ENCODE measurements at regions of chr14 and their contacts with region 1.

Region 1: DNA sequence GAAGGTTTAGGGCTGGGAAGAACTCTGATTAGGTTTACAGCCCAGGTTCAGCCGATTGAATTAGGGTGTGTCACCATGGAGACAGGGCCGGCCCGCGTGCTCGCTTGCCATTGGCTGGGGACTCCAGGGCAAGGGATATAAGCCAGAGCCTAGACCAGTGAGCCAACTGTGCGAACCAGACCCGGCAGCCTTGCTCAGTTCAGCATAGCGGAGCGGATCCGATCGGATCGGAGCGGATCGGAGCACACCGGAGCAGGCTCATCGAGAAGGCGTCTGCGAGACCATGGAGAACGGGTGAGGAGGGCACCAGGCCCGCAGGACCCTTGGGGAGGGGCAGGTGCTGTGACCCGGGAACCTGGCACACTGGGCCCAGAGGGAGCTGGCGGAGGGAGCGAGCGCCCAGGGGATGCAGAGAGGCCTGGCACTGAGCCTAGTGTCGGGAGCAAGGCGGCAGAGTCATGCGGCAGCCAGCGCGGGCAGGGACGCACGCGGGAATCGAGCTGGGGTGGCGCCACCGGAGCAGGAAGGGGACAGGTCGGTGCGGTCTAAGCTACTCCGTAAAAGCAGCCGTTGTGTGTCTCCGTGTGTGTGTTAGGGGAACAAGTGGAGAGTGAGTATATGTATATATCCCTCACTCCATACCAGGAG is at the start of gene PNP:
- DNase-seq: peak; percentile 95
- H3K4me3 ChIP-seq: peak within 1 kb of the TSS; percentile 78 to 84
- H3K27ac ChIP-seq: peak within 1 kb of the TSS; percentile 64 to 91
- H3K4me1 ChIP-seq: peaks cover 0 to 14% of the 10 kb centered on the region in 2 experiments; a peak in 2 of 4 replicates
- H3K27me3 ChIP-seq: no peaks in the 10 kb centered on the region; the same call in 1 of the 2 replicates
- CTCF ChIP-seq: no peak
- EP300 ChIP-seq: no peak
- RAD21 ChIP-seq: no peak
- polyA plus RNA-seq, gene PNP: 29.8 and 38.2 TPM in 2 replicates

Region 2: DNA sequence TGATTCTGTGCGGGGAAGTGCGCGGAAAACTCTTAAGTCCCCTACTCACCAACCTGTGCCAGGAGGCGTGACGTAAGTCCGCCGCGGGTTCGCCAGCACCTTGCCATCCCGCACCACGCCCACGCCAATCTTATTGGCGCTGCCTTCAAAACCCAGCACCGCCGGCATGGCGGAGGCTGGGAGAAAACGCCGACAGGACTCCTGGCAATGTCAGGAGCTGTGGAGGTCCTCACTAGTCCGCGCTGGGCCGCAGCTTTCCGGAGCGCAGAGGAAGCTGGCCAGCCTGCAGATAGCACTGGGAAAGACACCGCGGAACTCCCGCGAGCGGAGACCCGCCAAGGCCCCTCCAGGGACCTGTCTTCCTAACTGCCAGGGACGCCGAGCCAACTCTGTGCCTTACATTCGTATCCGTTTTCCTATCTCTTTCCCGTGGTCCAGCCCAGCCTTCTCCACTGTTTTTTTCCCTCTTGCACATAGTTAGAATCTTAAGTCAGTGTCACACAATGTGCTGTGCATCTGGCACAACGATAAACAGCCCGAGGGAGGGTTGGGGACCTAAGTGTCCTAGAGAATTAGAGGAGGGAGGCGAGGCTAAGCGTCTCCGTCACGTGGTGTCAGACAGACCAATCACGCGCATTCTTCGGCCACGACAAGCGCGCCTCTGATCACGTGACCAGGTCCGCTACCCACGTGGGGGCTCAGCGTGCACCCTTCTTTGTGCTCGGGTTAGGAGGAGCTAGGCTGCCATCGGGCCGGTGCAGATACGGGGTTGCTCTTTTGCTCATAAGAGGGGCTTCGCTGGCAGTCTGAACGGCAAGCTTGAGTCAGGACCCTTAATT is 14.6 kb before region 1 on chr14 and contains the starts of genes APEX1 and OSGEP:
- CTCF ChIA-PET with region 1: interaction called, 3 read pairs
- POLR2A ChIA-PET with region 1: interaction called, 35 read pairs
- DNase-seq: peak; percentile 95
- H3K4me3 ChIP-seq: peak within 1 kb of the TSS; percentile 92
- H3K27ac ChIP-seq: peak within 1 kb of the TSS; percentile 92 to 96
- H3K4me1 ChIP-seq: peaks cover 5 to 6% of the 10 kb centered on the region in 2 experiments; a peak in 3 of 4 replicates
- H3K27me3 ChIP-seq: no peaks in the 10 kb centered on the region
- CTCF ChIP-seq: no peak
- EP300 ChIP-seq: no peak
- RAD21 ChIP-seq: no peak; the same call in 1 of the 2 replicates
- polyA plus RNA-seq, gene APEX1: 279 and 291 TPM in 2 replicates
- polyA plus RNA-seq, gene OSGEP: 32.9 and 38.7 TPM in 2 replicates

Region 3: DNA sequence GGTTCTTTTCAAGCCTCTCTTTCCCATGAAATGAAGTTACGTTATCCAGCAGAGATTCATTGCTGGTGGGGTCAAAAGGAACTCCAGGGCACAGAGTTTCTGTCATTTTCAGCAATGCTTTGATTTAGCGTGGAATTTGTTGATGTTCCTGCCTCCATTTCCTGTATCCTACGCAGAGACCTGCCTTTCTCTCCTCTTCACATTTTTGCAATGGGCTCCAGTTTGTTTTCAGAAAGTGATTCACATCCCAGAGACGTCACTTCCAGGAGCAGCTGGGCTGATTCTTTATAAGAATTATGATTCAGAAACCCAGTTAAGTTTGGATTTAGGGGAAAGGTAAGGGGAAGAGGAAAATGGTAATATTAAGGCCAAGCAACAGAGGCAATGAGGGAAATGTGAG is 47.5 kb after region 1 on chr14:
- CTCF ChIA-PET with region 1: no interaction called
- POLR2A ChIA-PET with region 1: no interaction called
- DNase-seq: no peak
- H3K4me3 ChIP-seq: no peak overlapping the region
- H3K27ac ChIP-seq: no peak overlapping the region
- H3K4me1 ChIP-seq: no peaks in the 10 kb centered on the region
- H3K27me3 ChIP-seq: peaks cover 5% of the 10 kb centered on the region; the same call in 1 of the 2 replicates
- CTCF ChIP-seq: no peak
- EP300 ChIP-seq: no peak
- RAD21 ChIP-seq: no peak

Measured in SK-N-SH (cell line).